Dendritic cell treated with granulocyte-macrophage colony-stimulating factor and Interleukin-4, amounts not matched to agents 40 ng/mL and 50 ng/mL, for 4 days (primary cell): ENCODE measurements at regions of chr9 and their contacts with region 1.

Region 1: DNA sequence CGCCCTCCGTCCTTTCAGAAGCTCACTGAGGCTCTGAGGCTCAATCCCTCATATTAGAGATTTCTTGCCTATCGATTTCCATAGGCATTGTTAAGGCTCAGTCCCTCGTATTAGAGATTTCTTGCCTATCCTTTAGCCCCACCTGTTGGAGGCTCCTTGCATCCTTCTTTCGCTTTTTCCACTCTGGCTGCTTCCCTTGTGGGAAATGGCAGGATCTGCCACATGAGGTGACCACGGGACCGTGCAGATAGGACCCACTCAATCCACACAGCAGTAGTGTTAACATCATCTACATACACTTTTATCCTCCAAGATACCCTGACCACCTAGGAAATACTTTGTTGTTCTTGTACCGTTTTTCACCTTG is 19.5 kb downstream of the IFT74 start:
- H3K4me3 Mint-ChIP-seq: no peak overlapping the region
- H3K27ac Mint-ChIP-seq: peak overlapping the region; percentile 47
- H3K4me1 Mint-ChIP-seq: peaks cover 7% of the 10 kb centered on the region
- H3K27me3 Mint-ChIP-seq: no peaks in the 10 kb centered on the region

Region 2: GRCh38 chr9:26744191-26744965 is 231.3 kb before region 1 on chr9:
- intact Hi-C with region 1: loop called (anchors 2 kb)
- H3K4me3 Mint-ChIP-seq: no peak overlapping the region
- H3K27ac Mint-ChIP-seq: no peak overlapping the region
- H3K4me1 Mint-ChIP-seq: no peaks in the 10 kb centered on the region
- H3K27me3 Mint-ChIP-seq: no peaks in the 10 kb centered on the region

Region 3: DNA sequence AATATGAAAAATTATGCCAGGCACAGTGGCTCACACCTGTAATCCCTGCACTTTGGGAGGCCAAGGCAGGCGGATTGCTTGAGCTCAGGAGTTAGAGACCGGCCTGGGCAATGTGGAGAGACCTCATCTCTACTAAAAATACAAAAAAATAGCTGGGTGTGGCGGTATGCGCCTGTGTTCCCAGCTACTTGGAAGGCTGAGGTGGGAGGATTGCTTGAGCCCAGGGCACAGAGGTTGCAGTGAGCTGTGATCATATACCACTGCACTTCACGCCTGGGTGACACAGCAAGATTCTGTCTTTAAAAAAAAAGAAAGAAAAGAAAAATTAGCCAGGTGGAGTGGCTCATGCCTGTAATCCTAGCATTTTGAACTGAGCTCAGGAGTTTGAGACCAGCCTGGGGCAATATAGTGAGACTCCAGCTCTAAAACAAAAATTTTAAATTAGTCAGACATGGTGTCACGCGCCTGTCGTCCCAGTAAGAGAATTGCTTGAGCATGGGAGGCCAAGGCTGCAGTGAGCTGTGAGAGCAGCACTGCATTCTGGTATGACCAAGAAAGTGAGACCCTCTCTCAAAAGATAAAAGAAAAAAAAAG is 46.7 kb before region 1 on chr9:
- intact Hi-C with region 1: loop called (anchors 10 kb)
- H3K4me3 Mint-ChIP-seq: no peak overlapping the region
- H3K27ac Mint-ChIP-seq: no peak overlapping the region
- H3K4me1 Mint-ChIP-seq: peaks cover 8% of the 10 kb centered on the region
- H3K27me3 Mint-ChIP-seq: no peaks in the 10 kb centered on the region

Region 4: DNA sequence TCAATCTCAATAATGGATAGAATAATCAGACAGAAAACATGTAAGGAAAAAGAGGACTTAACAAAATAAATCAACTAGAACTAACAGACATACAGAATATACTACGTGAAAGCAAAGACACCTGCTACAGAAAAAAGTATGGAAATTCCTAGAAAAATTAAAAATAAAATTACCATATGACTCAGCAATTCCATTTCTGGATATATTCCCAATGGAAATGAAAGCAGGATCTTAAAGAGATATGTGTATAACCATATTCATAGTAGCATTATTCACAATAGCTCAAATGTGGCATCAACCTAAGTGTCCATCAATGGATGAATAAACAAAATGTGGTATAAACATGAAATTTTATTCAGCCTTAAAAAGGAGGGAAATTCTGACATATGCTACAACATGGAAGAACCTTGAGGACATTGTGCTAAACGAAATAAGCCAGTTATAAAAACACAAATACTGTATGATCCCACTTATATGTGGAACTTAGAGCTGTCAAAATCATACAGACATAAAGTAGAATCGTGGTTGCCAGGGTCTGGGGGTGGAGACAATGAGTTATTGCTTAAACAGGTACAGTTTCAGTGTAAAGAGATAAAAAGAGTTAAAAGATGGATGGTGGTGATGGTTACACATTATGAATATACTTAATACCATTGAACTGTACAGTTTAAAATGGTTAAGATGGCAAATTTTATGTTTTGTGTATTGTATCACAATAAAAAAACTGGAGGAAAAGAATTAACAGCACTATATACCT is 35.5 kb before region 1 on chr9:
- intact Hi-C with region 1: loop called (anchors 5 kb)
- H3K4me3 Mint-ChIP-seq: no peak overlapping the region
- H3K27ac Mint-ChIP-seq: no peak overlapping the region
- H3K4me1 Mint-ChIP-seq: peaks cover 53% of the 10 kb centered on the region
- H3K27me3 Mint-ChIP-seq: no peaks in the 10 kb centered on the region

Region 5: DNA sequence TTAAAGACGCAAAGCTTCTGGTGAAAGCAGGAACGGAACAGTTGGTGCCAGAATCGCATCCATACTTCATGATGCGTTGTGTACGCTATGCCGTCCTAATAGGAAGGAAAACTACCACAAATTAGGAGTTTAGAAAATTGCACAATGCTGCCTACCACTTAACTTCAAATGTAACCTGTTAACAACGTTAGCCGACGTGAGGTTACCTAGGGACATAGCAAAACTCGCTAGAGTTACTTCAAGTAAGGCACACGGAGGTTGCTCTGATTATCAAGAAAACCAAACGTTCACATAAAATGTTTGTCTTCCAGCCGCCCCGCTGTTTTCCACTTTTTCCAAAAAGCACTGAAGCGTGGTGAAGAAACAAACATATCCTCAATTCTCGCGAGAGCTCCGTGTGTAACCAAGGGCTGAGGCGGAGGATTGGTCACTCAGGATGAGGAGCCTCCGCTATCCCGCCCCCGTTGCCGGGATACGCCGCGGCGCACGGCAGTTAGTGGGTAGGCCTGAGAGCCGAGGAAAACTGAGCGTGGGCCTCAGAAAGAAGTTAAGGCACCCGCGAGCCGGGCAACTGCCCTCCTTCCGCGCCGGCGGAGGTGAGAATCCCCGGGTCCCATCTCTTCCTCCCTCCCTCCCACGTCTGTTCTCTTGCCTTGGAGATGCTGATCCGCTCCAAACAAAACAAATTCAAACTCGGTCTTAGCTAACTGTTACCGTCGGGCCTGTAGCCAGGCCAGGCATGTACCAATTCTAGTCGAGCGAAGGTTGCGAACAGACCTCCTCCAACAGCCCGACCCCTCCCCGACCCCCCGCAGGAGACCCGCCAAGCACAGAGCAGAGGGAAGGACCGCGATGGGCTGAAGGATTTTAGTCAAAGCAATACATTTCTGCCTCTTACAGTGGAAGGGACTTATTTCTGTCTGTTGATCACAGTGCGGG is 19.5 kb before region 1 on chr9 and contains the start of gene IFT74:
- intact Hi-C with region 1: no loop called
- H3K4me3 Mint-ChIP-seq: peak within 1 kb of the TSS; percentile 86
- H3K27ac Mint-ChIP-seq: peak within 1 kb of the TSS; percentile 99
- H3K4me1 Mint-ChIP-seq: peaks cover 40% of the 10 kb centered on the region
- H3K27me3 Mint-ChIP-seq: no peaks in the 10 kb centered on the region

Region 6: GRCh38 chr9:27086818-27087680 is 111.4 kb after region 1 on chr9:
- intact Hi-C with region 1: no loop called
- H3K4me3 Mint-ChIP-seq: no peak overlapping the region
- H3K27ac Mint-ChIP-seq: no peak overlapping the region
- H3K4me1 Mint-ChIP-seq: no peaks in the 10 kb centered on the region
- H3K27me3 Mint-ChIP-seq: no peaks in the 10 kb centered on the region

Region 7: DNA sequence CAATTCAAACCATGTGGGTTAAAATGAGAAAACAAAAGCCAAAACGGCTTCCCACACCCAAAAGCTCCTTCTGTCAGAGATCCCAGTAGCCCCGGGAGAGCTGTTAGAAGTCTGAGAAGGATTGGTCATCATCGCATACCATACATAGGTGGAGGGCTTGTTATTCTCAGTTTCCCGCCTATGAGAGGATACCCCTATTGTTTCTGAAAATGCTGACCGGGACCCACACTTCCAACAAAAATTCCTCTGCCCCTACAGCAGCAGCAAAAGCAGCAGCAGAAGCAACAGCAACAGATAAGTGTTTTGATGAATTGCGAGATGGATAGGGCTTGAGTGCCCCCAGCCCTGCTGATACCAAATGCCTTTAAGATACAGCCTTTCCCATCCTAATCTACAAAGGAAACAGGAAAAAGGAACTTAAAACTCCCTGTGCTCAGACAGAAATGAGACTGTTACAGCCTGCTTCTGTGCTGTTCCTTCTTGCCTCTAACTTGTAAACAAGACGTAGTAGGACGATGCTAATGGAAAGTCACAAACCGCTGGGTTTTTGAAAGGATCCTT is 133.4 kb after region 1 on chr9 and contains the start of gene TEK:
- intact Hi-C with region 1: no loop called
- H3K4me3 Mint-ChIP-seq: no peak within 1 kb of the TSS
- H3K27ac Mint-ChIP-seq: no peak within 1 kb of the TSS
- H3K4me1 Mint-ChIP-seq: no peaks in the 10 kb centered on the region
- H3K27me3 Mint-ChIP-seq: no peaks in the 10 kb centered on the region

Region 8: DNA sequence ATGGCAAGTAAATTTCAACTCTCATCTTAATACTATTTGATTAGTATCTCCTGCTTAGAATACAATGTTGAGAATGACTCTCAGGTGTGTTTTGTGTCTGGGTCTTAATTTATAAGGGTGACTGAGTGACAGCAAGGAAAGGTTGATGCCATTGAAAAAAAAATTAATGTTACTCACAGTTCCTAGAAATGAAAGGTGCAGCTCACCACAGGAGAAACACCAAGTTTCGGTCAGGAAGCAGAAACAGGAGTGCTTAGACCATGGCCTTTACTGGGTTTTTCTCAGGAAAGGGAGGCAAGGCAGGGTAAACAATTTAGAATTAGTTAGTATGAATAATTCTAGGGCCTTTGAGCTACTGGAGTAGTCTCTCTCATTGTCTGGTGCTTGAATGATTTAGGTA is 756.8 kb after region 1 on chr9:
- intact Hi-C with region 1: no loop called
- H3K4me3 Mint-ChIP-seq: no peak overlapping the region
- H3K27ac Mint-ChIP-seq: no peak overlapping the region
- H3K4me1 Mint-ChIP-seq: no peaks in the 10 kb centered on the region
- H3K27me3 Mint-ChIP-seq: peaks cover 2% of the 10 kb centered on the region